Endothelial cell of umbilical vein (primary cell): ENCODE measurements at regions of chr12 and their contacts with region 1.

Region 1: DNA sequence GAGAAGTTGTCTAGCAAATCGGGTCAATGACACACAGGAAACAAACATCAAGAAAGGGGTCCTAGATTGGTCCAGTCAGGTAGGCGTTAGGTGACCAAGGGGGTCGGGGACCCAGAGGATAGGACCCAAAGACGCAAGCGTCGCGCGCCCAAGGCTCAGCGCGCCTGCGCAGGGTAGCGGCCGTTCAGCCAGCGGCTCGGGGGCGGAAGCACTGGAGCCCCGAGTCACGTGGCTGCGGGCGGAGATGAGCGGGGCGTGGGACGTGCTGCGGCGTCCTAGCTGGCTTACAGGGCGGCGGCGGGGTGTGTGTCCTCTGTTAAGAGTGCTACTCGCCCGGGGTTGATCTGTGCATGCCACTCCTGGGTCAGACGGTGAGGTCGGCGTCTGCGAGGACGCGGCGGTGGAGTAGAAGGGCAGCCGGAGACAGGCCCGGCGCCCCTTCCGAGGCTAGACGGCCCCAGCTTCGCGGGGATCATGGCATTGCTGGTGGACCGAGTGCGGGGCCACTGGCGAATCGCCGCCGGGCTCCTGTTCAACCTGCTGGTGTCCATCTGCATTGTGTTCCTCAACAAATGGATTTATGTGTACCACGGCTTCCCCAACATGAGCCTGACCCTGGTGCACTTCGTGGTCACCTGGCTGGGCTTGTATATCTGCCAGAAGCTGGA is at the start of gene SLC35E3:
- DNase-seq: peak; percentile 85
- H3K4me3 ChIP-seq: peak within 1 kb of the TSS; percentile 7 to 87 (median 64)
- H3K27ac ChIP-seq: peak within 1 kb of the TSS; percentile 25
- H3K4me1 ChIP-seq: peaks cover 16% of the 10 kb centered on the region
- H3K27me3 ChIP-seq: no peaks in the 10 kb centered on the region
- CTCF ChIP-seq: no peak
- POLR2A ChIP-seq: peak; percentile 79
- total RNA-seq, gene SLC35E3: 9.9 and 13.8 TPM in 2 replicates

Region 2: DNA sequence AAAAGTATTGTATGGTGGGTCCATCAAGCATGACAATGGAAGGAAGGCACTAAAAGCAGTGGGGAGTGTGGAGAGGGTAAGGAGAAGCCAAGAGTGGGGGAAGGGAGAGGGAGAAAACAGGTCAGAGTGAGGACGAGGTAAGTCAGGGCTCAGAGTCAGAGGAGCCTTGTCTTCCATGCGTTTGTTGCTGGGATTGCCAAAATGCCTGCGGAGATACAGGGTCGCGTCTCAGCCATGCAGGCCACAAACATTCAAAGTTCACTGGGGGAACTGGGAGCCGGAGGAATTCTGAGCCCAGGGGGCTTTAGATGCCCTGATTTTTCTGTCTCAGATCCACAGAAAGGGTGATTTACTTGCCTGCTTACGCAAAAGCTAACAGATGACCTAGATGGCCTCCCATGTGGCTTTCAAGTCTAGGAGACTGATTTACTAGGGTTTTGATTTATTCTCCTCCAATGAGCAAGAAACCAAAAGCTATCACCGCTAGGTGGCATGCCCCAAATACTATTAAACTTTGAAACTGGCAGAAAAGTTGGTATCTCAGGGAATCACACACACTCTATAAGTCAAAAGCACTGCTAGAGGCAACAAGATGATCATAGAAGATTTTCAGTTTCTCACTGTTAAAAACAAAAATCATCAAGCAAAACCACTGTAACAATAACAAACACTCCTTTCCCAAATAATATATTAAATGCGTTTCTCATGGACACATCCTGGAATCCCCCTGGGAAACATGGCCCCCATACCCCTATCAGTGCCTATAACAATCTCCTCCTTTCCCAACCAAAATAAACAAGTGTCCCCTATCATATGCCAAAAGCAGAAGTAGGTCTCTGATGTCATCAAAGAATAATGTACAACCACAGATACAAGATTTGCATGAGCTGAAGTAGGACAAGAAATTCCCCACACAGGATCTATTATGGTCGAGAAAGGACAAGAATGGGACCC is 387.2 kb before region 1 on chr12:
- CTCF ChIA-PET with region 1: interaction called, 3 read pairs
- POLR2A ChIA-PET with region 1: no interaction called
- dilution Hi-C with region 1: no loop called
- intact Hi-C with region 1: loop called (anchors 2 kb)
- DNase-seq: peak; percentile 83
- H3K4me3 ChIP-seq: no peak overlapping the region
- H3K27ac ChIP-seq: no peak overlapping the region
- H3K4me1 ChIP-seq: no peaks in the 10 kb centered on the region
- H3K27me3 ChIP-seq: no peaks in the 10 kb centered on the region
- CTCF ChIP-seq: peak; percentile 45 to 58
- POLR2A ChIP-seq: no peak

Region 3: DNA sequence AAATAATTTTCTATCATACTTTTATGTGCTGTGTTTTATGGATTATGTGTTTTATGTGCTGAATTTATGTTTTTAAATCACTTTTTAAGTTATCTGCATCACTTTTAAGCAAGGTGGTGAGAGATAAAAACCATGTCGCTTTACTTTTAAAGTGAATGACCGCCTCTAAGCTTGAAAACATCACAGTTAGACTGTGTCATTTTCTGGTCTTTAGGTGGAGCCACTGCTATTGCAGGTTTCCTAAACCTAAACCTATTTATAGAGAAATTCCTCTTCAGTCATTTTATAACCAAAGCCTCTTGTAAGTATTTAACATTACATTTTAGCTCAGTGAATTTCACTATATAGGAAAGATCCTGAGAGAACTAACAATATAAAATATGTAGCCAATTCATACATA is 40.9 kb after region 1 on chr12:
- CTCF ChIA-PET with region 1: interaction called, 13 read pairs
- POLR2A ChIA-PET with region 1: no interaction called
- dilution Hi-C with region 1: no loop called
- intact Hi-C with region 1: loop called (anchors 1 kb)
- DNase-seq: no peak
- H3K4me3 ChIP-seq: no peak overlapping the region
- H3K27ac ChIP-seq: peak overlapping the region; percentile 87
- H3K4me1 ChIP-seq: peaks cover 18% of the 10 kb centered on the region
- H3K27me3 ChIP-seq: no peaks in the 10 kb centered on the region
- CTCF ChIP-seq: no peak
- POLR2A ChIP-seq: no peak